Calu3 (cell line): ENCODE measurements at regions of chr2 and their contacts with region 1.

Region 1: DNA sequence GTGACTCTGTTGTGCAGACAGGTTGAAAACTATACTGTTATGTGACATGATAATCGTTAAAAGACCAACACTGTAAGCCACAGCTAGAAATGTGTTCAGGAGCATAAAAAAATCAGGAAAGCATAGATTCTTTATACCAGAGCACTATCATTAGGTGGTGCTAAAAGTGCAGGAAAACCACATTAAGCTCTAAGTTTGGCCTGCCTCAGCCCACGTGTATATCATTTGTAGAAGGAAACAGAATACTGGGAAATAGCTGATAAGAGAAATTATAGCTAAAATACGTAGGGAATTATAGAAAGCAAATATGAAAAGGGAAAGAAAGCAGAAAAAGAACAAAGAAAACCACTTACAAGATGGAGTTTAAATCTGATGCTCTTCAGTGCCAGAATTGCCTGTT is 26.5 kb upstream of the C2orf74 start:
- DNase-seq: no peak
- H3K4me3 Mint-ChIP-seq: no peak overlapping the region
- H3K27ac Mint-ChIP-seq: no peak overlapping the region
- H3K4me1 Mint-ChIP-seq: no peaks in the 10 kb centered on the region
- H3K27me3 Mint-ChIP-seq: no peaks in the 10 kb centered on the region
- CTCF ChIP-seq: no peak

Region 2: DNA sequence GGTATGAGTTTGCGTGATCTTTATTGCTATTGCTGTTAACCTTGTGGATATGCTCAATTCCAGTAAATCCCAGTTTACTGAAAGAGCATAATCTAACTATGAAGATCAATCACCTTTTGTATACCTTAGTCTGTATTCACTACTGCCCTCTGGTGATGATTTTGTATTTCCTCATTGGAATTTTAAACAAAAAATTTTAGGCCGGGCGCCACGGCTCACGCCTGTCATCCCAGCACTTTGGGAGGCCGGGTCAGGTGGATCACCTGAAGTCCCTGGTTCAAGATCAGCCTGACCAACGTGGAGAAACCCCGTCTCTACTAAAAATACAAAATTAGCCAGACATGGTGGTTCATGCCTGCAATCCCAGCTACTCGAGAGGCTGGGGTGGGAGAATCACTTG is 775.1 kb after region 1 on chr2:
- CTCF ChIA-PET with region 1: no interaction called
- intact Hi-C with region 1: loop called (anchors 5 kb)
- DNase-seq: peak; percentile 24
- H3K4me3 Mint-ChIP-seq: no peak overlapping the region
- H3K27ac Mint-ChIP-seq: no peak overlapping the region
- H3K4me1 Mint-ChIP-seq: no peaks in the 10 kb centered on the region
- H3K27me3 Mint-ChIP-seq: no peaks in the 10 kb centered on the region
- CTCF ChIP-seq: no peak